B cell (primary cell): ENCODE measurements at regions of chr3 and their contacts with region 1.

Region 1: DNA sequence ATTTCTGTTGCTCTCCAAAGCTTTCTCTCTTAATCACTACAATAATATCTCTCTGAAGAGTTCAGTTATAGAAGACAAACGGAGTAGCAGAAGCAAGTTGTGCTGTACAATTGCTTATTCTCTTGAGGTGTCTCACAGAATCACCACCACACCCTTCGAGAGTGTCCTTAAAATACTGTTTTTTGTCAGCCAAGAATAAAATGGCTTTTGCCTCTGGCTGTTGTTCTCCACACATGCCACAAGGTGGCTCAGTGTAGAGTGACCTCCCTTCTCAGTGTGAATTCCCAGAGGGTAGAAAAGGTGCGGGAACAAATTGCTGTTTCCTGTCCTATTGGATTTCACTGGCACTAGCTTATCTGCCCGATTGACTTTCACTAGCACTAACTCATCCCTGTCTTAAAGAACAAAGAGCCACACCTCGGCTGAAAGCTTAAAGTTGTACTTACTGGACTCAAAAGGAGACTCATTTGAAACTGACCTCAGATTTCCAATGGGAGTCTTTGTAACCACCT is 134.2 kb upstream of the SATB1 start:
- DNase-seq: peak; percentile 63
- ATAC-seq: peak; percentile 67
- H3K4me3 ChIP-seq: no peak overlapping the region
- H3K4me3 Mint-ChIP-seq: no peak overlapping the region
- H3K27ac ChIP-seq: no peak overlapping the region
- H3K27ac Mint-ChIP-seq: no peak overlapping the region
- H3K4me1 ChIP-seq: peaks cover 6 to 10% of the 10 kb centered on the region in 2 donors
- H3K4me1 Mint-ChIP-seq: peaks cover 17% of the 10 kb centered on the region
- H3K27me3 ChIP-seq: no peaks in the 10 kb centered on the region
- H3K27me3 Mint-ChIP-seq: peaks cover 5% of the 10 kb centered on the region
- CTCF ChIP-seq: peak; percentile 83

Region 2: GRCh38 chr3:17562845-17563244 is 996.5 kb before region 1 on chr3:
- CTCF ChIA-PET with region 1: no interaction called
- POLR2A ChIA-PET with region 1: no interaction called
- intact Hi-C with region 1: no loop called
- DNase-seq: no peak
- ATAC-seq: no peak
- H3K4me3 ChIP-seq: no peak overlapping the region
- H3K4me3 Mint-ChIP-seq: no peak overlapping the region
- H3K27ac ChIP-seq: no peak overlapping the region
- H3K27ac Mint-ChIP-seq: no peak overlapping the region
- H3K4me1 ChIP-seq: no peaks in the 10 kb centered on the region
- H3K4me1 Mint-ChIP-seq: no peaks in the 10 kb centered on the region
- H3K27me3 ChIP-seq: no peaks in the 10 kb centered on the region
- H3K27me3 Mint-ChIP-seq: no peaks in the 10 kb centered on the region
- CTCF ChIP-seq: no peak

Region 3: DNA sequence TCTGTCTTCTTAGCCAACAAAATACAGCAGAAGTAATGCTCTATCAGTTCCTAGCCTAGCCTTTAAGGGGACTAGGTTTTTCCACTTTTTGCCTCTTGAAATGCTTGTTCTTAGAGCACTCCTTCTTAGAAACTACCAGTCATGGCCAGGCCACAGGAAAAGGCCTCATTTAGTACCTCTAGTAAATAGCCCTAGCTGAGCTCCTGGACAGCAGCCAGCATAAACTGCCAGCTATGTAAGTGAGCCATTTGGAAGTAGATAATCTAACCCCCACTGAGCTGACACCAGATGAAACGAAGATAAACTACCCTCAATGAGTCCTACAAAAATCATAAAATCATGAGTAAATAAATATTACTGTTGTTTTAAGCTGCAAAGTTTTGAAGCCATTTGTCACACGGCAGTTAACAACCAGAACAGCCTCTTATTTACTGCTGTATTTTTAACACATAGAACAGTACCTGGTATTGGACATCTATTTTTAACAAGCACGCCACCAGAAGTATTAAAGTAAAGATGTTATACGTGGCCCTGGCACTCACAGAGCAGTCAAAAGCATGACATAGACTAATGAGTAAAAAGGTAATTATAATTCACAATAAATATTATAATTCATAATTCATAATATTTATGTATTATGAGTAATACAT is 828.9 kb before region 1 on chr3:
- CTCF ChIA-PET with region 1: no interaction called
- POLR2A ChIA-PET with region 1: no interaction called
- intact Hi-C with region 1: no loop called
- DNase-seq: no peak
- ATAC-seq: no peak
- H3K4me3 ChIP-seq: no peak overlapping the region
- H3K4me3 Mint-ChIP-seq: no peak overlapping the region
- H3K27ac ChIP-seq: peak overlapping the region in 1 of 2 donors; percentile 1
- H3K27ac Mint-ChIP-seq: peak overlapping the region; percentile 13
- H3K4me1 ChIP-seq: peaks cover 5 to 11% of the 10 kb centered on the region in 2 donors
- H3K4me1 Mint-ChIP-seq: peaks cover 36% of the 10 kb centered on the region
- H3K27me3 ChIP-seq: no peaks in the 10 kb centered on the region
- H3K27me3 Mint-ChIP-seq: no peaks in the 10 kb centered on the region
- CTCF ChIP-seq: no peak

Region 4: DNA sequence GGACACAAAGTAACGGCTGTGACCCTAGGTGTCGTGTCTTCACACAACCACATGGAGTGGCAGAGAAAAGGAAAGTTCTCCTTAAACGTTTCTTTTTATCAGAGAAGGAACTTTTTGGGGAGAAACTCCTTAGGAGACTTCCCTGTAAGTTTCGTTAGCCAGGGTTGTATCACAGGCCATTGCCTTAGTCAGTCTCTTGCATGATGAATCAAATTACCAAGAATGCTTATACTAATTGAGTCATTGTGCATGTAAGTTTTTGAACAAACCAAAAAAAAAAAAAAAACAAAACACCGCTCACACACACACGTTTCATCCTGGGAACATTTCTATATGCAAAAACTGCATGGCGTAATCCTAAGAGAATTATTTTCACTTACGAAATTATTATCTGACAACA is 16.2 kb after region 1 on chr3:
- CTCF ChIA-PET with region 1: interaction called, 15 read pairs
- POLR2A ChIA-PET with region 1: no interaction called
- intact Hi-C with region 1: no loop called
- DNase-seq: no peak
- ATAC-seq: no peak
- H3K4me3 ChIP-seq: no peak overlapping the region
- H3K4me3 Mint-ChIP-seq: no peak overlapping the region
- H3K27ac ChIP-seq: no peak overlapping the region
- H3K27ac Mint-ChIP-seq: no peak overlapping the region
- H3K4me1 ChIP-seq: peaks cover 7 to 9% of the 10 kb centered on the region in 2 donors
- H3K4me1 Mint-ChIP-seq: peaks cover 9% of the 10 kb centered on the region
- H3K27me3 ChIP-seq: no peaks in the 10 kb centered on the region
- H3K27me3 Mint-ChIP-seq: peaks cover 3% of the 10 kb centered on the region
- CTCF ChIP-seq: no peak

Region 5: GRCh38 chr3:18597919-18598318 is 38.5 kb after region 1 on chr3:
- CTCF ChIA-PET with region 1: no interaction called
- POLR2A ChIA-PET with region 1: no interaction called
- intact Hi-C with region 1: no loop called
- DNase-seq: no peak
- ATAC-seq: no peak
- H3K4me3 ChIP-seq: no peak overlapping the region
- H3K4me3 Mint-ChIP-seq: no peak overlapping the region
- H3K27ac ChIP-seq: no peak overlapping the region
- H3K27ac Mint-ChIP-seq: no peak overlapping the region
- H3K4me1 ChIP-seq: no peaks in the 10 kb centered on the region
- H3K4me1 Mint-ChIP-seq: no peaks in the 10 kb centered on the region
- H3K27me3 ChIP-seq: no peaks in the 10 kb centered on the region
- H3K27me3 Mint-ChIP-seq: no peaks in the 10 kb centered on the region
- CTCF ChIP-seq: no peak

Region 6: DNA sequence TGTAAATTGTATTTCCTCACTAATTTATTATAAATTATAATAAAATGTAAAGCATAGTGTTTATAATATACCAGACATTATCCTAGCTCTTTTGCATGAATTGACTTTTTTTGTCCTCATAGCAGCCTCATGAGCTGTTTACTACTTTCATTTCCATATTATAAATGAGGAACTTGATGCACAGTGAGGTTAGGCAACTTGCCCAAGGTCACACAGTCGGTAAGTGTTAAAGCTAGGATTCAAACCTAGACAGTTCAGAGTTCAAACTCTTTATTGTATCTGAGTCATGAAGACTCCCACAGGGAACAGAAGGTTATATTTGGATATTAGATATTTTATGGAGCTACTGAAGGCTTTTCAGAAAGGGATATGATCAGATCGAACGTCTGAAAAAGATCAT is 188.0 kb after region 1 on chr3:
- CTCF ChIA-PET with region 1: interaction called, 10 read pairs
- POLR2A ChIA-PET with region 1: no interaction called
- intact Hi-C with region 1: no loop called
- DNase-seq: no peak
- ATAC-seq: peak; percentile 24
- H3K4me3 ChIP-seq: no peak overlapping the region
- H3K4me3 Mint-ChIP-seq: no peak overlapping the region
- H3K27ac ChIP-seq: no peak overlapping the region
- H3K27ac Mint-ChIP-seq: no peak overlapping the region
- H3K4me1 ChIP-seq: peaks cover 21 to 28% of the 10 kb centered on the region in 2 donors
- H3K4me1 Mint-ChIP-seq: peaks cover 33% of the 10 kb centered on the region
- H3K27me3 ChIP-seq: no peaks in the 10 kb centered on the region
- H3K27me3 Mint-ChIP-seq: no peaks in the 10 kb centered on the region
- CTCF ChIP-seq: no peak

Region 7: DNA sequence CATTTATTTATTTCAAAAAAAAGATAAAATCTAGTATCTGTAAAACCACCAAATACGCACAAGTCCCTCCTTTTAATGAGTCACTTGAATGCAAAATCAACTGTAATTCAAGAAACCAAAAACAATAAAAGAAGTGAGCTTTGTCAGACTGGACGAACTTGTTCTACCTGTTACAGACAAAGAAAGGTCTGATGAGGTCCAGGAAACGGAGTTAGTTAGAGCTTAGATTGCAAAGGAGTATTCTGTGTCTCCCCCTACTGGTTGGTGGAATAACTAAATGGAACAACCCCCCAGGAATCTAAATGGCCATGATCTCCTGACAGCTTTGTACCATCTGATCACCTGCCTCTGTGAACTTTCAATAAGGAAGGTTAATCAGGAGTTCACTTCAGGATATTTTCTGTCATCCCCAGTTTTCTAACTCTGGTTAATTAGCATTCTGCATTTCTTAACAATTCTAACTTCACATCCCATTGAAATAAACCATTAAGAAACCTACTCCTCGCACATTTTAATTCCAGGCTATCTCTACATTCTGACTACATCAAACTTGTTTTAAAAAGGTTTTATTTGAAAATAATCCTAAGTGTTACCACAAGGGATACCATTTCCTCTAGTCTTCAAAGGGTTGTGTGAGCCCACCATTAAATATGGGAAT is 198.8 kb after region 1 on chr3:
- CTCF ChIA-PET with region 1: interaction called, 110 read pairs
- POLR2A ChIA-PET with region 1: no interaction called
- intact Hi-C with region 1: loop called (anchors 1 kb)
- DNase-seq: peak; percentile 84
- ATAC-seq: peak; percentile 88
- H3K4me3 ChIP-seq: no peak overlapping the region
- H3K4me3 Mint-ChIP-seq: no peak overlapping the region
- H3K27ac ChIP-seq: no peak overlapping the region
- H3K27ac Mint-ChIP-seq: no peak overlapping the region
- H3K4me1 ChIP-seq: no peaks in the 10 kb centered on the region
- H3K4me1 Mint-ChIP-seq: no peaks in the 10 kb centered on the region
- H3K27me3 ChIP-seq: no peaks in the 10 kb centered on the region
- H3K27me3 Mint-ChIP-seq: no peaks in the 10 kb centered on the region
- CTCF ChIP-seq: peak; percentile 87